SK-N-SH (cell line): ENCODE measurements at regions of chr5 and their contacts with region 1.

Region 1: DNA sequence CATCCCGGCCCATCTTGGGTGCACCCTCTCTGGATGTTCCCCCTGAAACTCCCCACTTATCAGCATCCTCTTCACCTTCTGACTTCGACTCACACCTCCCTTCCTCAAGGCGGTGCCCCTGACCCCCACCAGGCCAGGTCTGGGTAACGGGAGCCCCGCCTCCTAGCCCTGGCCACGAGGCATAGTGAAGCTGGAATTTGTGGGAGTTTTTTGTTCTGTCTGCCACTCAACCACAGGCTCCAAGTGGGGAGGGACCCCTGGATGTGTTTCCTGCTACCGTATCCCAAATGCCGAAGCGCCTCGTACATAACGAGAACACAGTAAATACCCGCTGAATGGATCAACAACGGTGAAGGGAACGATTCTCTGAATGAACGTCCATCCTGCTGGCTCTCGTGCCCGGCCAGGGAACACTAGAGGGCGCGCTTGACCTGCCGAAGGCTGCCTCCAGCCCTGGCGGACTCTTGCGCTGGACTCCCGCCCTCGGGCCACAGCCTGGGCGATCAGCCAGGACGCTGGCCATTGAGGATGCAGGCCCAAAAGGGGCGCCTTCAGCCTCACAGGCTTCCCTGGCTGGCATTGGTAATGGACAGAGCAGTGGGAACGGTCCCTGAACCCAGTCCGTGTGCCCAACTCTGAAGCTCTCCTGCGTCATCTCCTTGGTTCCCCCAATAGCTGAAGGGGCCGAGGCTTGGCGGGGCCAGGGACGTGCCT is 47.3 kb upstream of the PHYKPL start:
- DNase-seq: peak; percentile 94
- H3K4me3 ChIP-seq: peak overlapping the region in 1 of 2 experiments; percentile 48; a peak in 1 of 4 replicates
- H3K27ac ChIP-seq: peak overlapping the region in 1 of 2 experiments; percentile 64; a peak in 1 of 4 replicates
- H3K4me1 ChIP-seq: peaks cover 0 to 26% of the 10 kb centered on the region in 2 experiments; a peak in 2 of 4 replicates
- H3K27me3 ChIP-seq: no peaks in the 10 kb centered on the region
- CTCF ChIP-seq: peak; percentile 32; the same call in 1 of the 2 replicates
- EP300 ChIP-seq: peak in 1 of 2 experiments; percentile 28; a peak in 1 of 4 replicates
- RAD21 ChIP-seq: peak; percentile 99

Region 2: GRCh38 chr5:178069909-178070308 is 210.0 kb before region 1 on chr5:
- CTCF ChIA-PET with region 1: no interaction called
- POLR2A ChIA-PET with region 1: no interaction called
- DNase-seq: no peak
- H3K4me3 ChIP-seq: no peak overlapping the region
- H3K27ac ChIP-seq: no peak overlapping the region
- H3K4me1 ChIP-seq: peaks cover 0 to 4% of the 10 kb centered on the region in 2 experiments; a peak in 1 of 4 replicates
- H3K27me3 ChIP-seq: peaks cover 2% of the 10 kb centered on the region; the same call in 1 of the 2 replicates
- CTCF ChIP-seq: peak; percentile 30
- EP300 ChIP-seq: no peak
- RAD21 ChIP-seq: peak; percentile 18; the same call in 1 of the 2 replicates

Region 3: GRCh38 chr5:178309271-178310013 is 29.6 kb after region 1 on chr5:
- CTCF ChIA-PET with region 1: interaction called, 10 read pairs
- POLR2A ChIA-PET with region 1: no interaction called
- DNase-seq: no peak
- H3K4me3 ChIP-seq: no peak overlapping the region
- H3K27ac ChIP-seq: peak overlapping the region in 1 of 2 experiments; percentile 40; a peak in 1 of 4 replicates
- H3K4me1 ChIP-seq: peaks cover 0 to 50% of the 10 kb centered on the region in 2 experiments; a peak in 1 of 4 replicates
- H3K27me3 ChIP-seq: no peaks in the 10 kb centered on the region
- CTCF ChIP-seq: no peak
- EP300 ChIP-seq: no peak
- RAD21 ChIP-seq: peak; percentile 32

Region 4: DNA sequence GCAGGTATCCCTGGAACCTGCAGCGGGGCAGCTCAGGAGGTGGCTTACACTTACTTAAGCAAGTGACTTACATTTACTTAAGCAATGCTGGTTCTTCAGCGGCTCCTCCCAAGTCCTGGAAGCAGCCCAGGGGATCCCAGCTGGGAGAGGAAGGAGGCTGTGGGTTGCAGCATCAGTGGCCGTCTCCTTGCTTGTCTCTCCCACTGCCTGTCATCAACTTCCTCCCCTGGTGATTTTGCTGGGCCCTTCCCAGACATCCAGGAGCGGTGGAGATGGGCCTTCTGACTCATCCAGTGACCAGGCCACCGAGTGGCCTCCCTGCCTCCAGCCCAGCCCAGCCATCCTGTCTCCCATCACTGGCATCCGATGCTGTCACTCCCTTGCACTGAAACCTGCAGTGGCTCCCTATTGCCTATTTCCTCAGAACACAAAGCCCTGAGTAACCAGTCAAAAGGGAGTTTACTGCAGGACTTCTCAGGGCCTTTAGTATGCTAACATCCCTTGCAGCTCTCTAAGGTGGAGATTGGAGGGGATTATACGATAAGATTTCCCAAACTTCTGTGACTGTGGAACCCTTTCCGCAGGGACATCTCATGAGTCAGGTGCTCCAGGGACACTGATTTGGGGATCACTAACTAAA is 108.6 kb after region 1 on chr5:
- CTCF ChIA-PET with region 1: interaction called, 13 read pairs
- POLR2A ChIA-PET with region 1: no interaction called
- DNase-seq: peak; percentile 20
- H3K4me3 ChIP-seq: no peak overlapping the region
- H3K27ac ChIP-seq: peak overlapping the region in 1 of 2 experiments; percentile 96; a peak in 2 of 4 replicates
- H3K4me1 ChIP-seq: peaks cover 0 to 82% of the 10 kb centered on the region in 2 experiments; a peak in 1 of 4 replicates
- H3K27me3 ChIP-seq: no peaks in the 10 kb centered on the region
- CTCF ChIP-seq: no peak
- EP300 ChIP-seq: no peak
- RAD21 ChIP-seq: no peak

Region 5: GRCh38 chr5:178453224-178453623 is 173.3 kb after region 1 on chr5:
- CTCF ChIA-PET with region 1: interaction called, 17 read pairs
- POLR2A ChIA-PET with region 1: no interaction called
- DNase-seq: no peak
- H3K4me3 ChIP-seq: no peak overlapping the region; a peak in 1 of 4 replicates
- H3K27ac ChIP-seq: peak overlapping the region in 1 of 2 experiments; percentile 99; a peak in 2 of 4 replicates
- H3K4me1 ChIP-seq: peaks cover 0 to 50% of the 10 kb centered on the region in 2 experiments; a peak in 2 of 4 replicates
- H3K27me3 ChIP-seq: no peaks in the 10 kb centered on the region
- CTCF ChIP-seq: no peak
- EP300 ChIP-seq: no peak
- RAD21 ChIP-seq: no peak

Region 6: GRCh38 chr5:178542455-178542854 is 262.6 kb after region 1 on chr5:
- CTCF ChIA-PET with region 1: interaction called, 13 read pairs
- POLR2A ChIA-PET with region 1: no interaction called
- DNase-seq: no peak
- H3K4me3 ChIP-seq: no peak overlapping the region
- H3K27ac ChIP-seq: peak overlapping the region in 1 of 2 experiments; percentile 29; a peak in 1 of 4 replicates
- H3K4me1 ChIP-seq: peaks cover 0 to 26% of the 10 kb centered on the region in 2 experiments; a peak in 1 of 4 replicates
- H3K27me3 ChIP-seq: no peaks in the 10 kb centered on the region
- CTCF ChIP-seq: no peak
- EP300 ChIP-seq: no peak
- RAD21 ChIP-seq: no peak

Region 7: DNA sequence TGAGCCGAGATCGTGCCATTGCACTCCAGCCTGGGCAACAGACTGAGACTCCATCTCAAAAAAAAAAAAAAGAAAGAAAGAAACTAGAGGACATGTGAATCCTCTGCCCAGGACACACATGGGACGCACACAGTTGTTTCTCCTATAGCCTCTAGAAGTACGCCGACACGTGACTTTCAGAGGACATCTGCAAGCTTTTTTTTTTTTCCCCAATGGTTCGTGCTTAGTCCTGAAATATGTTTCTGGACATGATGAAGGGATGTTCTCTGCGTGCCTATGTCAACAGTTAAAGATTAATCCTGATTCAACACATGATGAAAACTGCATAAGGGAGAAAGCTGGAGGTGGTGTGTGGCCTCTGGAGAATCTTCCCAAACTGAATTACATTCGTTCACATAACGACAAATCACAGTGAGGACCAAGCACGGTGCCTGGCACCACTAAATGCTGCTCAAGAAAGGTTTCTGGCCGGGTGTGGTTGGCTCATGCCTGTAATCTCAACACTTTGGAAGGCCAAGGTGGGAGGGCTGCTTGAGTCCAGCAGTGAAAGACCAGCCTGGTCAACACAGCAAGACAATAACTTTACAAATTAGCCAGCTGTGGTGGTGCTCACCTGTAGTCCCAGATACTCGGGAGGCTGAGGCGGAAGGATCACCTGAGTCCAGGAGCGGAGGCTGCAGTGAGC is 300.5 kb after region 1 on chr5:
- CTCF ChIA-PET with region 1: interaction called, 21 read pairs
- POLR2A ChIA-PET with region 1: no interaction called
- DNase-seq: no peak
- H3K4me3 ChIP-seq: no peak overlapping the region
- H3K27ac ChIP-seq: no peak overlapping the region
- H3K4me1 ChIP-seq: no peaks in the 10 kb centered on the region; a peak in 1 of 4 replicates
- H3K27me3 ChIP-seq: no peaks in the 10 kb centered on the region
- CTCF ChIP-seq: no peak
- EP300 ChIP-seq: no peak
- RAD21 ChIP-seq: no peak

Region 8: DNA sequence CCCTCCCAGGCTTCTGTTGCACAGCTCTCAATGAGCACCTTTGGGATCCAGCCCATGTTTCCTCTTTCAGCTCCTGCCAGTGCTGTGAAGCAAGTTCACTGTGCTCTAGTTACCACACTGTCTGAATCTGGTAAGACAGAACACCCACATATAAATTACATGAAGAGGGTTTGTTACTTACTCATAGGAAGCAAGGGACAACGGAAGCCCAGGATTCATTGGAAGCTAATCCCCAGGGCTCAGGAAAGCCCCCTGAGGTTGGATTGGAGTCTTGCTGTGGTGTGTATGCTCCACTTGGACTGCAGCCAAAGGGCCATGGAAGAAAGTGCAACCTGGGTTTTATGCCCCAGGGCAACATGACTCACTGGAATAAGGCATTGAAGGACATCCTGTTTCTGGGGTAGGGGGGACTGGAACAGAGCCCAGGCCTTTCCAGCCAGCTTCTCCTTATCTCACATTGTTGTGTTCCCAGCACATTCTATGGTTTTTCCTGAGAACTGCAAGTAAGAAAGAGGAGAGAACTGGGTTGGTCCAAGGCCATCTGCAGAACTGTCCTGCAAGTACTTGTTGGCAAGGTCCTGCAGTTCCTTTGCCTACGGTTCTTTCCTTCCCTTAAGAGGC is 362.6 kb after region 1 on chr5:
- CTCF ChIA-PET with region 1: no interaction called
- POLR2A ChIA-PET with region 1: no interaction called
- DNase-seq: peak; percentile 26
- H3K4me3 ChIP-seq: no peak overlapping the region
- H3K27ac ChIP-seq: no peak overlapping the region
- H3K4me1 ChIP-seq: no peaks in the 10 kb centered on the region; a peak in 1 of 4 replicates
- H3K27me3 ChIP-seq: no peaks in the 10 kb centered on the region
- CTCF ChIP-seq: no peak
- EP300 ChIP-seq: no peak
- RAD21 ChIP-seq: no peak